ENCODE measurements at regions of chr17 and their contacts with region 1.

Region 1: GRCh38 chr17:38444151-38444550 is 15.9 kb downstream of the ARHGAP23 start:
- DNase-seq: peak in 1 of 2 experiments; percentile 80
- H3K4me3 ChIP-seq: no peak overlapping the region
- H3K27ac ChIP-seq: no peak overlapping the region
- H3K4me1 ChIP-seq: peaks cover 3 to 50% (median 31%) of the 10 kb centered on the region in 4 experiments
- H3K27me3 ChIP-seq: no peaks in the 10 kb centered on the region
- CTCF ChIP-seq: peak; percentile 90 to 95 (median 94)
- EP300 ChIP-seq: no peak
- POLR2A ChIP-seq: no peak
- RAD21 ChIP-seq: peak; percentile 88 to 90

Region 2: DNA sequence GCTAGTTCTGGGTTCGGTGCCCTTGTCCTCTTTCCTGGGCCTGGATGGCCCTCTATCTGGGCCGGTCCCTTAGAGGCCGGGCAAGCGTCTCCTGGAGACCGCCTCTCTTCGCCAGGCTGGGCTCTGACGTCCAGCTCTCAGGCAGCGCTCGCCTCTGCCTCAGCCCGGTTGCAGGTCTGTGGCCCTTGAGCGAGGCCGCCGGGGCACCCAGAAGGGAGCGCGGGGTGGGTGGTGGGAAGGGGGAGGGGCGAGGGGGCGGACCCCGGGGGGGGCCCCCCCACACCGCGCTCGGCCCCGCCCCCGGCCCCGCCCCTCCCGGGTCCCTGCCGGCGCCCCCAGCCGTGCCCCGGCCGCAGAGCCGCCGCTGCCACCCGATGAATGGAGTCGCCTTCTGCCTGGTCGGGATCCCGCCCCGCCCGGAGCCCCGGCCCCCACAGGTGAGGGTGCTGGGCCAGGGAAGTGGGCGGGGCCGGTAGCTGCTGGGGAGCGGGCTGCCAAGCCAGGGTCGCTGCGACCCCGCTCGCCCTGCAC is 16.0 kb before region 1 on chr17 and contains the start of gene ARHGAP23:
- CTCF ChIA-PET with region 1: interaction called, 204 read pairs
- POLR2A ChIA-PET with region 1: interaction called, 72 read pairs
- DNase-seq: peak in 1 of 2 experiments; percentile 67
- H3K4me3 ChIP-seq: peak within 1 kb of the TSS; percentile 66 to 91 (median 72)
- H3K27ac ChIP-seq: no peak within 1 kb of the TSS; the same call in 1 of the 2 replicates
- H3K4me1 ChIP-seq: peaks cover 22 to 35% (median 25%) of the 10 kb centered on the region in 4 experiments
- H3K27me3 ChIP-seq: no peaks in the 10 kb centered on the region
- CTCF ChIP-seq: no peak
- EP300 ChIP-seq: no peak
- POLR2A ChIP-seq: no peak
- RAD21 ChIP-seq: peak in 1 of 2 experiments; percentile 1; a peak in 1 of 4 replicates
- total RNA-seq, gene ARHGAP23: 107 and 108 TPM in 2 replicates

Region 3: GRCh38 chr17:38459557-38459956 is 15.4 kb after region 1 on chr17:
- CTCF ChIA-PET with region 1: interaction called, 51 read pairs
- POLR2A ChIA-PET with region 1: interaction called, 27 read pairs
- DNase-seq: no peak
- H3K4me3 ChIP-seq: no peak overlapping the region
- H3K27ac ChIP-seq: peak overlapping the region; percentile 23; the same call in 1 of the 2 replicates
- H3K4me1 ChIP-seq: peaks cover 8 to 32% (median 20%) of the 10 kb centered on the region in 4 experiments
- H3K27me3 ChIP-seq: no peaks in the 10 kb centered on the region
- CTCF ChIP-seq: no peak
- EP300 ChIP-seq: no peak
- POLR2A ChIP-seq: no peak
- RAD21 ChIP-seq: no peak

Region 4: GRCh38 chr17:38485146-38485468 is 41.0 kb after region 1 on chr17:
- CTCF ChIA-PET with region 1: interaction called, 28 read pairs
- POLR2A ChIA-PET with region 1: no interaction called
- DNase-seq: no peak
- H3K4me3 ChIP-seq: no peak overlapping the region
- H3K27ac ChIP-seq: no peak overlapping the region
- H3K4me1 ChIP-seq: peaks cover 0 to 6% (median 4%) of the 10 kb centered on the region in 4 experiments; a peak in 3 of 7 replicates
- H3K27me3 ChIP-seq: no peaks in the 10 kb centered on the region
- CTCF ChIP-seq: no peak
- EP300 ChIP-seq: no peak
- POLR2A ChIP-seq: no peak
- RAD21 ChIP-seq: no peak

Region 5: GRCh38 chr17:38575781-38576180 is 131.6 kb after region 1 on chr17:
- CTCF ChIA-PET with region 1: no interaction called
- POLR2A ChIA-PET with region 1: no interaction called
- DNase-seq: no peak
- H3K4me3 ChIP-seq: no peak overlapping the region
- H3K27ac ChIP-seq: no peak overlapping the region
- H3K4me1 ChIP-seq: peaks cover 13 to 34% (median 21%) of the 10 kb centered on the region in 4 experiments
- H3K27me3 ChIP-seq: peaks cover 51 to 94% (median 91%) of the 10 kb centered on the region in 4 experiments
- CTCF ChIP-seq: no peak
- EP300 ChIP-seq: no peak
- POLR2A ChIP-seq: no peak
- RAD21 ChIP-seq: no peak